CD8-positive, alpha-beta T cell (primary cell): ENCODE measurements at regions of chr10 and their contacts with region 1.

Region 1: DNA sequence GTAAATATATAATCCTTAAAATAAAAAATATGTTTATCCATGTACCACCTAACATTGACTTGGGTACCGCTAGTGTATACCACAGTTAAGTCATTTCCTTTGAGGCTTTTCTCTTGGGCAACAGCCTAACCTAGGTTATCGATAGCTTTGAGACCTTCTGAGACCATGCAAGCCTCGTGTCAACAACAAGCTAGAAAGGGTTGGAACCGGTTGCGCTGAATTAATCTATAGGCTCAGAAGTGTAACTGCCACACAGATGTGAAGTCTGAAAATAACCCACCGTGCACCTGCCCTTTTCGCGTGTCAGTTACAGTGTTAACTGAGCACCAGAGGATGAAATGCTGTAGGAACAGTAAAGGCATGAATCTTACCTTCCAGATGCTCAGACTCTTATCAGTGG is 59.8 kb downstream of the ARID5B start:
- DNase-seq: peak in 7 of 9 experiments; percentile 5 to 68 (median 36)
- ATAC-seq: peak; percentile 83
- H3K4me3 ChIP-seq: no peak overlapping the region
- H3K4me3 Mint-ChIP-seq: peak overlapping the region; percentile 39
- H3K27ac ChIP-seq: peak overlapping the region in 1 of 2 experiments; percentile 56
- H3K27ac Mint-ChIP-seq: peak overlapping the region; percentile 84
- H3K4me1 ChIP-seq: peaks cover 4% of the 10 kb centered on the region
- H3K4me1 Mint-ChIP-seq: peaks cover 50% of the 10 kb centered on the region
- H3K27me3 ChIP-seq: no peaks in the 10 kb centered on the region
- H3K27me3 Mint-ChIP-seq: no peaks in the 10 kb centered on the region
- CTCF ChIP-seq: no peak

Region 2: DNA sequence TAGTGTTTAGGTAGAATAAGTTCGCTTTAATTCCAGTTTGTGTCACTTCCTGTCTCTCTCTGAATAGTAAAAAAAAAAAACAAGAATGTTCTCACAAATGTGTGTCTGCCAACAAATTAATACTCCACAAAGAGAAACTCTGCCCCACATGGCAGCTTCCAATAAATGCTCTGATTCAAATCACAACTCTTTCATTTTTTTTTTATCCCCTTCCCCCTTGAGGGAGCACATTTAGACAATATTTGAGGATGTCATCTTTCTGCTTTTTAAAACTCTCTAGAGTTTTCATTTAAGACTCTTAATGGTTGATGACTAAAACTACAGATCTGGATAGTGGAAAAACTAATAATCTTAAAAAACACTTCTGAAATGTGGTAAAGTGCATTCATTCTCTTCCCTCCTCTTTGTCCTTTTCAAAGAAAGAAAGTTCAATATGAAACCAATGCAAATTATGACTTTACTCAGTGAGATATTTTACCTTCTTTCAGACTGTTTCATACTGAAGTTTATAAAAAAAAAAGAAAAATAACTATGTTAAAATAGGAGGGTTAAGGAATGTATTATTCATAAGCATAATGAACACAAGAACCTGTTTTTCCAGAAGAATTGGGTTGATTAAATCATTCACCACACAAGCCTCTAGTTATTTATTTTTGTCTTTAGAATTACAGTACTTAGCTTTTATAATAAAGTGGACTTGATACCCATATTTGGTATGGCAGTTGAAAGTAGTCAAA is 17.4 kb before region 1 on chr10:
- CTCF ChIA-PET with region 1: no interaction called
- POLR2A ChIA-PET with region 1: interaction called, 3 read pairs
- intact Hi-C with region 1: loop called in 1 of 2 experiments (anchors 2 kb)
- DNase-seq: peak in 2 of 9 experiments; percentile 54 to 75
- ATAC-seq: peak; percentile 61
- H3K4me3 ChIP-seq: peak overlapping the region; percentile 2 to 33
- H3K4me3 Mint-ChIP-seq: peak overlapping the region; percentile 71
- H3K27ac ChIP-seq: peak overlapping the region in 1 of 2 experiments; percentile 87
- H3K27ac Mint-ChIP-seq: peak overlapping the region; percentile 86
- H3K4me1 ChIP-seq: peaks cover 22% of the 10 kb centered on the region
- H3K4me1 Mint-ChIP-seq: peaks cover 57% of the 10 kb centered on the region
- H3K27me3 ChIP-seq: no peaks in the 10 kb centered on the region
- H3K27me3 Mint-ChIP-seq: no peaks in the 10 kb centered on the region
- CTCF ChIP-seq: no peak

Region 3: GRCh38 chr10:61992671-61993668 is 31.7 kb after region 1 on chr10:
- CTCF ChIA-PET with region 1: no interaction called
- POLR2A ChIA-PET with region 1: interaction called, 3 read pairs
- intact Hi-C with region 1: loop called in 1 of 2 experiments (anchors 5 kb)
- DNase-seq: peak in 8 of 9 experiments; percentile 15 to 88 (median 47)
- ATAC-seq: peak; percentile 83
- H3K4me3 ChIP-seq: peak overlapping the region in 1 of 2 experiments; percentile 27
- H3K4me3 Mint-ChIP-seq: peak overlapping the region; percentile 64
- H3K27ac ChIP-seq: peak overlapping the region; percentile 20 to 85
- H3K27ac Mint-ChIP-seq: peak overlapping the region; percentile 90
- H3K4me1 ChIP-seq: peaks cover 16% of the 10 kb centered on the region
- H3K4me1 Mint-ChIP-seq: peaks cover 48% of the 10 kb centered on the region
- H3K27me3 ChIP-seq: no peaks in the 10 kb centered on the region
- H3K27me3 Mint-ChIP-seq: no peaks in the 10 kb centered on the region
- CTCF ChIP-seq: no peak

Region 4: GRCh38 chr10:62098278-62099121 is 137.2 kb after region 1 on chr10:
- CTCF ChIA-PET with region 1: no interaction called
- POLR2A ChIA-PET with region 1: no interaction called
- intact Hi-C with region 1: no loop called
- DNase-seq: no peak
- ATAC-seq: no peak
- H3K4me3 ChIP-seq: no peak overlapping the region
- H3K4me3 Mint-ChIP-seq: no peak overlapping the region
- H3K27ac ChIP-seq: no peak overlapping the region
- H3K27ac Mint-ChIP-seq: no peak overlapping the region
- H3K4me1 ChIP-seq: no peaks in the 10 kb centered on the region
- H3K4me1 Mint-ChIP-seq: peaks cover 2% of the 10 kb centered on the region
- H3K27me3 ChIP-seq: no peaks in the 10 kb centered on the region
- H3K27me3 Mint-ChIP-seq: no peaks in the 10 kb centered on the region
- CTCF ChIP-seq: no peak